ENCODE measurements at regions of chr15 and their contacts with region 1.

Region 1: GRCh38 chr15:96701443-96701842 is 370.9 kb downstream of the NR2F2 start:
- DNase-seq: no peak
- H3K4me3 Mint-ChIP-seq: no peak overlapping the region
- H3K27ac Mint-ChIP-seq: no peak overlapping the region
- H3K4me1 Mint-ChIP-seq: peaks cover 29% of the 10 kb centered on the region
- H3K27me3 Mint-ChIP-seq: no peaks in the 10 kb centered on the region
- CTCF ChIP-seq: no peak

Region 2: DNA sequence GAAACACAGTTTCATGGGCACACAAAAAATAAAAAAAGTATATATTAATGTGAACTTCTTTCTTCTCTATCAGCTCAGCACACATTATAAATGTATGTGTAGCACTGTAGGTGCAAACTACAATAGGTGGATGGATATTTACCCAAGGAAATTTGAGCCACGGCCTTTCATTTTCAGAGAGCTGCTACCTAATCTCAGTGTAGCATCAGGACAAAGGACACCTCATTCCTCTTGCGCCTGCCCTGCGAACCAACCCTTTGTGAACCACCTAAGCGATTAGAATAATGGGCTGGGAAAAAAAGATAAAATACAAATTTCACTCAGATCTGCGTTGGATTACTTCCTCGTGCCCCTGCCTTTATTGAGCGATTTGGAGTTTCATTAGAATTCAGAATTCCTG is 107.7 kb before region 1 on chr15:
- CTCF ChIA-PET with region 1: no interaction called
- intact Hi-C with region 1: loop called (anchors 2 kb)
- DNase-seq: peak; percentile 13
- H3K4me3 Mint-ChIP-seq: peak overlapping the region; percentile 66
- H3K27ac Mint-ChIP-seq: peak overlapping the region; percentile 40
- H3K4me1 Mint-ChIP-seq: peaks cover 14% of the 10 kb centered on the region
- H3K27me3 Mint-ChIP-seq: no peaks in the 10 kb centered on the region
- CTCF ChIP-seq: no peak

Region 3: GRCh38 chr15:97978401-97979139 is 1277.1 kb after region 1 on chr15:
- CTCF ChIA-PET with region 1: no interaction called
- intact Hi-C with region 1: no loop called
- DNase-seq: no peak
- H3K4me3 Mint-ChIP-seq: no peak overlapping the region
- H3K27ac Mint-ChIP-seq: no peak overlapping the region
- H3K4me1 Mint-ChIP-seq: peaks cover 16% of the 10 kb centered on the region
- H3K27me3 Mint-ChIP-seq: no peaks in the 10 kb centered on the region
- CTCF ChIP-seq: no peak